ENCODE measurements at regions of chr10 and their contacts with region 1.

Region 1: GRCh38 chr10:79068562-79069324 is at the start of gene ZMIZ1:
- DNase-seq: peak; percentile 63 to 95
- H3K4me3 ChIP-seq: peak within 1 kb of the TSS; percentile 90 to 98
- H3K27ac ChIP-seq: peak within 1 kb of the TSS; percentile 98 to 99
- H3K4me1 ChIP-seq: peaks cover 10 to 29% of the 10 kb centered on the region in 2 donors
- H3K27me3 ChIP-seq: no peaks in the 10 kb centered on the region
- CTCF ChIP-seq: peak in 2 of 3 experiments; percentile 8 to 38
- total RNA-seq, gene ZMIZ1: 96.2 TPM

Region 2: GRCh38 chr10:78047314-78047891 is 1021.3 kb before region 1 on chr10:
- intact Hi-C with region 1: loop called (anchors 10 kb)
- DNase-seq: peak in 1 of 2 donors; percentile 92
- H3K4me3 ChIP-seq: no peak overlapping the region
- H3K27ac ChIP-seq: no peak overlapping the region
- H3K4me1 ChIP-seq: no peaks in the 10 kb centered on the region
- H3K27me3 ChIP-seq: no peaks in the 10 kb centered on the region
- CTCF ChIP-seq: peak; percentile 85 to 92 (median 86)

Region 3: DNA sequence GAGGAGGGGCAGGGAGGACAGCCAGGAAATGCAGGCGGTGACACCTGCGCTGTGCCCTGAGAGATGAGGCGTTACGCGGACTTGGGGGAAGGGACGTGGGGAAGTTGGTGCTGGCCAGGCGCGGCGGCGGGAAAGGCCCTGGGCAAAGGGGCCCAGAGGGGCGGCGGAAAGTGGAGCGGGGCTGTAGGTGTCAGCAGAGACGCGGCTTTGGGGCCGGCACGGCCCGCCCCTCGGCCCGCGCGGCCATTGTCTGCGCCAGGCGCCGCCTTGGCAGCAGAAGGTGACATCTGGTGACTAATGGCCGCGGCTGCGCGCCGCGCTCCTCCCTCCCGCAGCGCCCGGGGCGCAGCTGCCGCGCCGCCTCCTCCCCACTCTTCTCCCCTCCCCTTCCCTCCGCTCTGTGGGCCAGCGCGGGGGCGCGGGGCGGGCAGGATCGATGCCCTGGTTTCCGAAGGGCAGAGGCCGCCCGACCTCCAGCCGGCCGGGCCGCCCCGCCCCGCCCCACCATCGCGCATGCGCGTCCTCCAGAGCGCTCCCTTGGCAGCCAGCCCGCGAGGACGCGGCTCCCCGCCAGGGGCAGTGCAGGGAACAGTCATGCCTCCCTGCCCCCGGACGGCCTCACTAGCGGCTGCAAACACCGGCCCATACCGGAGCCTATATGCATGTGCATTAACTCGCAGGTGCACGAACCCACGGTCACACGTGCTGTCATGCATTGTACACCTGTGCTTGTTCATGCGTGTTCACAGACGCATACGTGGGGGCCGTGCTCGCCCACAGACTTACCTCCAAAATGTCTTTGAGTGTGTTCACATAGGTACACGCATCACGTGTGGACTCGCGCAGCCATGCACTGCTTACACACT is 765.5 kb before region 1 on chr10:
- intact Hi-C with region 1: loop called (anchors 1 kb)
- DNase-seq: peak; percentile 75 to 96
- H3K4me3 ChIP-seq: peak overlapping the region; percentile 66 to 75
- H3K27ac ChIP-seq: peak overlapping the region; percentile 78 to 82
- H3K4me1 ChIP-seq: peaks cover 0 to 11% of the 10 kb centered on the region in 2 donors
- H3K27me3 ChIP-seq: no peaks in the 10 kb centered on the region
- CTCF ChIP-seq: peak; percentile 55 to 80 (median 56)

Region 4: DNA sequence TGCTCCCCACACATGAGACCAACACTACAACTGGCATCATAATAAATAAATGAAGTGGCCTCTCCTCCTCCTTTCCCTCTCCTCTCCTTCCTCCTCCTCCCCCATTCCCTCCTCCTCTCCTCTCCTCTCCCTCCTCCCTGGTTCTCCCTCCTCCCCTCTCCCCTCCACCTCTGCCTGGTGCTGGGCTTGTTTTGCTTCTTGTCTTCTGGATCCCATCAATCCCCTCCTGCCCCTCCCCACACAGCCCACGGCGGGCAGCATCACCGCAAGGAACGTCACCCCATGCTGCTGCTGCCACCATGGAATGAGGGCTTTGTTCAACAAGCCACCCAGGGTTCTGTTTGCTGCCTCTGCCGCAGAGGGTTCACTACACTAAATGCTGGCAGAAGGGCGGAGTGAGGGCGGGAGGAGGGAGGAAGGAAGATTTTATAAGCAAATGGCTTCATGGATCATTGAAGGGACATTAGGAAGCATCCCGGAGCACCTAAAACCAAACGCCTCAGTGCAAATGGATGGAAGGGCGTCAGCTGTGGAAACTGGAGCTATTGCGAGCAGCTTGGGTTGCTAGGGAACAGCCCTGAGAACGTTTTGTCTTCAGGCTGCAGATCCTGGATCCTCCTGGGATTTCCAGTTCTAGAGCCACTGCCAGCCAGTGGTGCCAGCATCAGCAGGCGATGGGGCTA is 379.7 kb before region 1 on chr10:
- intact Hi-C with region 1: loop called (anchors 5 kb)
- DNase-seq: peak; percentile 59 to 86
- H3K4me3 ChIP-seq: peak overlapping the region in 1 of 2 donors; percentile 55
- H3K27ac ChIP-seq: peak overlapping the region; percentile 55 to 68
- H3K4me1 ChIP-seq: peaks cover 0 to 20% of the 10 kb centered on the region in 2 donors
- H3K27me3 ChIP-seq: no peaks in the 10 kb centered on the region
- CTCF ChIP-seq: no peak

Region 5: DNA sequence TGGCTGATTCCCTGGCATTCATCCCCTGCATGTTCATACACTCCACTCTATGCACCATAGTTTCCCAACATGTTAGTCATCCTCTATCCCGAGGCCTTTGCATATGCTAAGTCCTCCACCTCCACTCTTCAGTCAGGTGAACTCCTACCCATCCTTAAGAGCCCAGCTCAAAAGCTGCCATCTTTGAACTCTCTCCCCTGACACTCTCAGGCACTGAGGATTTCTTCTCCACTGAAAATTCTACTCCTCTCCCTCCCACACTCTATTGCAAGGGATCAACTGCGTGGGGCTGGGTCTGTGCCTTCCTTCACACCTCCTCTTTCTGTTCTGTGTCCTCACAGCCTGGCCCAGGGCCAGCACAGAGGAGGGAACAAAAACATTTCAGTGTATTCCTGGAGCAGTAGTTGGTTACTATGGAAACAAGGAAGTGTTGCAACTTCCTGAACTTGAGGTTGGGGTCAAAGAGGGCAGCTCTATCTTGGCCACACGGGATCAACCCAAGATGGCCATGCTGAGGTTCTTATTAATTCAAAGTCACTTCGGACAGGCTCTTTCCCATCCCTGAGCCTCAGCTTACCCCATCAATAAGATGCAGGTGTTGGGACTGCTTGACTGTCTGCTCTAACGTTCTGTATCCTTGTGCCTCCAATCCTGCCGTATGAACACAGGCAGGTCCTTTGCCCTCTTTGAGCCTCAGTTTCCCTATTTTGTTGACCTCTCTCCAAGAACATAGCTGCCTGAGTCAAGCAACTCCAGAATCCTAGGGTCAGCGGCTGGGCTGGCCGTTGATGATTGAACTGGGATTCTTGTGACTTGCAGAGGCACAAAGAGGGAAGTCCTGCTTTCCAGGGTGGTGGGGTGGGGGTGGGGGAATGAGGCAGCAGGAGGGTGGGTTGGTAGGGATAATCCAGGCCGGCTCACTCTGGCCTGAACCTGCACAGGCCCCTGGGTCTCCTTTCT is 15.5 kb after region 1 on chr10:
- intact Hi-C with region 1: loop called (anchors 2 kb)
- DNase-seq: peak; percentile 89 to 97
- H3K4me3 ChIP-seq: no peak overlapping the region
- H3K27ac ChIP-seq: peak overlapping the region; percentile 55 to 66
- H3K4me1 ChIP-seq: peaks cover 41 to 65% of the 10 kb centered on the region in 2 donors
- H3K27me3 ChIP-seq: no peaks in the 10 kb centered on the region
- CTCF ChIP-seq: no peak

Region 6: GRCh38 chr10:79149662-79150443 is 81.1 kb after region 1 on chr10:
- intact Hi-C with region 1: loop called (anchors 1 kb)
- DNase-seq: peak; percentile 60 to 81
- H3K4me3 ChIP-seq: no peak overlapping the region
- H3K27ac ChIP-seq: peak overlapping the region; percentile 87 to 88
- H3K4me1 ChIP-seq: peaks cover 48 to 89% of the 10 kb centered on the region in 2 donors
- H3K27me3 ChIP-seq: no peaks in the 10 kb centered on the region
- CTCF ChIP-seq: no peak

Region 7: GRCh38 chr10:79195091-79195923 is 126.6 kb after region 1 on chr10:
- intact Hi-C with region 1: loop called (anchors 1 kb)
- DNase-seq: peak; percentile 36 to 93
- H3K4me3 ChIP-seq: no peak overlapping the region
- H3K27ac ChIP-seq: peak overlapping the region in 1 of 2 donors; percentile 62
- H3K4me1 ChIP-seq: peaks cover 3 to 7% of the 10 kb centered on the region in 2 donors
- H3K27me3 ChIP-seq: no peaks in the 10 kb centered on the region
- CTCF ChIP-seq: peak; percentile 89 to 97 (median 93)